GM12878 (cell line): ENCODE measurements at regions of chrX and their contacts with region 1.

Region 1: GRCh38 chrX:9677098-9677739 is 88.4 kb downstream of the GPR143 start:
- DNase-seq: peak; percentile 89
- ATAC-seq: peak; percentile 97
- H3K4me3 ChIP-seq: peak overlapping the region; percentile 11; the same call in 1 of the 2 replicates
- H3K27ac ChIP-seq: peak overlapping the region; percentile 85
- H3K4me1 ChIP-seq: peaks cover 6% of the 10 kb centered on the region
- H3K27me3 ChIP-seq: no peaks in the 10 kb centered on the region
- CTCF ChIP-seq: no peak
- EP300 ChIP-seq: peak; percentile 96 to 98
- POLR2A ChIP-seq: no peak
- RAD21 ChIP-seq: 0 out of 2 replicates have a peak, but pooled peaks have one; percentile 5

Region 2: DNA sequence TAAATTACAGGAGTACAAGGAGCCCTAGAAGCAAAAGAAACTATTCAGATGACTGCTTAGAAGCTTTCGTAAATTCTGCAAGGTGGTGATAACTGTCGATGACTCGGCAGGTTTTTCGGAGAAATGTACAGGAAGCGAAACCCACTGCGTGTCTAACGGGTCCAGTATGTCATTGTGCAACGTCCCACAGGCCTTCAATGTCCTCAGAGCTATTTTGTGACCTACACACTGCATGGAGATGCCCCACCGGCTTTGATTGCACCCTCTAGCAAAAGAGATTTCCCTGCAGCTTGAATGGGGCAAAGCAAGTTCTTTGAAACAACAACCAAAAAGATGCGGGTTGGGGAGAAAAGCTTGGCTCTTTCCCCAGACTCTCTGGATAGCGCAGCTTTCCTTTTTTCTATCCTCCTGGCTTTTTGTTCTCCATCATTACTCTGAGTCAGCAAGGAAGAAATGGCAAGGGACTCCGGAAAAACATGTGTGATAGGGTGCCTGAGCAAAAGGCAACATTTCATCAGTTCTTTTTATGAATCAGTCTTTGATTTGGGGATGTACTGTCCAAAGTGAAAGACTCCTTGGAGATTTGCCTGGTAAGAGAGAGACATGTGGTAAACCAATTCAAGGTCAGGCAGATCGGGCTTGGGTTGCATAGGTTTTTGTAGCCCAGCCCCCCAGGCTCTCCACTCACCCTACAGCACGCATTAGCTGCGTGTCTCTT is 324.4 kb before region 1 on chrX:
- CTCF ChIA-PET with region 1: no interaction called
- POLR2A ChIA-PET with region 1: no interaction called
- RAD21 ChIA-PET with region 1: interaction called, 6 read pairs
- SMC1A ChIA-PET with region 1: no interaction called
- in situ Hi-C with region 1: no loop called
- intact Hi-C with region 1: loop called (anchors 5 kb)
- DNase-seq: peak; percentile 38
- ATAC-seq: peak; percentile 87
- H3K4me3 ChIP-seq: peak overlapping the region; percentile 15; the same call in 1 of the 2 replicates
- H3K27ac ChIP-seq: peak overlapping the region; percentile 79
- H3K4me1 ChIP-seq: peaks cover 5% of the 10 kb centered on the region; the same call in 1 of the 2 replicates
- H3K27me3 ChIP-seq: no peaks in the 10 kb centered on the region
- CTCF ChIP-seq: no peak
- EP300 ChIP-seq: peak in 1 of 2 experiments; percentile 50; a peak in 2 of 4 replicates
- POLR2A ChIP-seq: 0 out of 2 replicates have a peak, but pooled peaks have one; percentile 15
- RAD21 ChIP-seq: no peak

Region 3: GRCh38 chrX:9510366-9510765 is 166.9 kb before region 1 on chrX:
- CTCF ChIA-PET with region 1: no interaction called
- POLR2A ChIA-PET with region 1: no interaction called
- RAD21 ChIA-PET with region 1: no interaction called
- SMC1A ChIA-PET with region 1: no interaction called
- in situ Hi-C with region 1: no loop called
- intact Hi-C with region 1: no loop called
- DNase-seq: no peak
- ATAC-seq: no peak
- H3K4me3 ChIP-seq: no peak overlapping the region
- H3K27ac ChIP-seq: no peak overlapping the region
- H3K4me1 ChIP-seq: no peaks in the 10 kb centered on the region
- H3K27me3 ChIP-seq: no peaks in the 10 kb centered on the region
- CTCF ChIP-seq: no peak
- EP300 ChIP-seq: no peak
- POLR2A ChIP-seq: no peak
- RAD21 ChIP-seq: no peak

Region 4: DNA sequence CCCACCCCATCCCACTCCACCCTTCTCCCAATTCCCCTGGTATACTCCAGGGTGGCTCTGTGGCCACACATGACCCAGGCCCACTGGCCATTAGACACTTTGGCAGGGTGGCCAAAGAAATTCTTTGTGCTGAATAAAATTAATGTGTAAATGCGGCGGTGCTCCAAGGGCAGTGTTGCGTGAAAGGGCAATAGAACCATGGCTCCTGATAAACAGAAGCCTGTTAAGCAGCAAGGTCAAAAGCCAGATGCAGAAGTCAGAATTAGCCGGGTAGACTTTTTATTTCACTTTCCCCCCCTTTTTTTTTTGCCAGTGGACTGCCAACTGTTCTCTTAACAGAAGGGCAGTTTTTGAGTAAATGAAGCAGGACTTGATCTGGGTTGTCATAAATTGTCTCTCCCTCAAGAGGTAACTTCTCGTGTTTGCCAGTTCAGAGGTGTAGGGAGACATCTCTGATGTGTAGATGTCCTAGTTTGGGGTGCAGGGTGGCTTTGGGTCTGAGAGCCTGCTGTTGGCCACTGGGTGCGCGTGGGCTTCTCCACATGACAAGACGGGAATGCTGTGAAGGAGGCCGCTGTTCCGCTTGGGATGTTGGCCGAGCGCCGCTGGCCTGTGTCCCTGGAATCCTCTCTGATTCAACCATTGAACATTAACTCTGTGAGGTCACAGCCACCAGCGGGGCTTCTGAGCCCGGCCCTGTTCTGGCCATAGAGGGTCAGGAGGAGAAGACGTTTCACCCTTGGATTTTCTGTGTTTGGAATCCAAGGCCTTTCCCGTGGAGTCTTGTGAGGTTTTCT is 72.9 kb before region 1 on chrX:
- CTCF ChIA-PET with region 1: no interaction called
- POLR2A ChIA-PET with region 1: no interaction called
- RAD21 ChIA-PET with region 1: interaction called, 3 read pairs
- SMC1A ChIA-PET with region 1: interaction called, 4 read pairs
- in situ Hi-C with region 1: no loop called
- intact Hi-C with region 1: loop called (anchors 2 kb)
- DNase-seq: no peak
- ATAC-seq: no peak
- H3K4me3 ChIP-seq: no peak overlapping the region
- H3K27ac ChIP-seq: no peak overlapping the region
- H3K4me1 ChIP-seq: no peaks in the 10 kb centered on the region; the same call in 1 of the 2 replicates
- H3K27me3 ChIP-seq: no peaks in the 10 kb centered on the region
- CTCF ChIP-seq: no peak
- EP300 ChIP-seq: no peak
- POLR2A ChIP-seq: no peak
- RAD21 ChIP-seq: no peak

Region 5: DNA sequence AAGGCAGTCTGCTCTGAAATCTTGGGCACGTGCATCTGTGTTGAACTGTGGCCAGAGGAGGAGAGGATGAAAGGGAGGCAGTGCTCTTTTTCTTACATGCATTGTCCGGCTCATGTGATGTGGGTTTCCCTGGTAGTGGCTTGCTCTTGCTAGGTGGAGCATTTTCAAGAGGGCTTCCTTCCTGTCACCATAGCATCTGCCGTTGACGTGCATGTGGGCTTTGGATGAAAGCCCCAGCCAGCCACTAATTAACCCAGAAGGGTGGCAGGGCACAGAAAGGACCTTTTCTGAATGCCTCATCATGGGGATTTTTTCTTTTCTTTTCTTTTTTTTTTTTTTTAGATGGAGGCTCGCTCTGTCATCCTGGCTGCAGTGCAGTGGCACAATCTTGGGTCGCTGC is 32.9 kb before region 1 on chrX:
- CTCF ChIA-PET with region 1: interaction called, 3 read pairs
- POLR2A ChIA-PET with region 1: no interaction called
- RAD21 ChIA-PET with region 1: no interaction called
- SMC1A ChIA-PET with region 1: interaction called, 3 read pairs
- in situ Hi-C with region 1: no loop called
- intact Hi-C with region 1: loop called (anchors 1 kb)
- DNase-seq: peak; percentile 61
- ATAC-seq: peak; percentile 97
- H3K4me3 ChIP-seq: no peak overlapping the region
- H3K27ac ChIP-seq: no peak overlapping the region
- H3K4me1 ChIP-seq: no peaks in the 10 kb centered on the region
- H3K27me3 ChIP-seq: no peaks in the 10 kb centered on the region
- CTCF ChIP-seq: no peak
- EP300 ChIP-seq: peak; percentile 63 to 79
- POLR2A ChIP-seq: no peak
- RAD21 ChIP-seq: no peak

Region 6: DNA sequence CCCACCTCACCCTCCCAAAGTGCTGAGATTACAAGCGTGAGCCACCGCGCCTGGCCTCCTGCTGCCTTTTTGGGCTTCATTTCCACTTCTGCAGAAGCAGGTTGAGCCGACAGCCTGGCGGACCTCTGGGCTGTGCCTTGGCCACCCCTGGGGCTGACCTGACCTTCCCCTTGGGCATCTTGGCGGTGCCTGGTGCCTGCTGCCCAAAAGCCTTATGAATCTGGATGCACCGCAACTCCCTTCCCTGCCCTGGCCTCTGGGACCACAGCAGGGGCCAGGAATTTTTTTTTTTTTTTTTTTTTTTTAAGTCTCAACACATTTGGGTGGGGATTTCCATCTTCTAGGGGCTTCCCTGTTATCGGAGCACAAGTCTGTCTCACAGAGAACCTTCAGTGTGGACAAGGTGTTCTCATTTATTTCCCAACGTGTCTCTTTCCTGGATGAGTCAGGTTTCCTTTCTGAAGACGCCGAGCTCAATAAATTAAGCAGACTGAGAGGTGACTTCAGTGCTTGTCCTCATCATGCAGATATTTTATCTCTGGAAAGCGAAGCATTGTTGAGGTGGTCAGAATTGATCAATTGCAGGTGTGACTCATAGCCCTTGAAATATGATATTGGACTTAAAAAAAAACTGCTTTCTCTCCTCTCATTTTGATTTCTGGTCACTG is 188.7 kb after region 1 on chrX:
- CTCF ChIA-PET with region 1: no interaction called
- POLR2A ChIA-PET with region 1: no interaction called
- RAD21 ChIA-PET with region 1: no interaction called
- SMC1A ChIA-PET with region 1: no interaction called
- in situ Hi-C with region 1: no loop called
- intact Hi-C with region 1: no loop called
- DNase-seq: no peak
- ATAC-seq: peak; percentile 81
- H3K4me3 ChIP-seq: no peak overlapping the region
- H3K27ac ChIP-seq: no peak overlapping the region
- H3K4me1 ChIP-seq: no peaks in the 10 kb centered on the region
- H3K27me3 ChIP-seq: no peaks in the 10 kb centered on the region; a peak in 1 of 4 replicates
- CTCF ChIP-seq: no peak
- EP300 ChIP-seq: no peak
- POLR2A ChIP-seq: no peak
- RAD21 ChIP-seq: no peak